Ovary (tissue), 10 donors: ENCODE measurements at regions of chr1 and their contacts with region 1.

Region 1: DNA sequence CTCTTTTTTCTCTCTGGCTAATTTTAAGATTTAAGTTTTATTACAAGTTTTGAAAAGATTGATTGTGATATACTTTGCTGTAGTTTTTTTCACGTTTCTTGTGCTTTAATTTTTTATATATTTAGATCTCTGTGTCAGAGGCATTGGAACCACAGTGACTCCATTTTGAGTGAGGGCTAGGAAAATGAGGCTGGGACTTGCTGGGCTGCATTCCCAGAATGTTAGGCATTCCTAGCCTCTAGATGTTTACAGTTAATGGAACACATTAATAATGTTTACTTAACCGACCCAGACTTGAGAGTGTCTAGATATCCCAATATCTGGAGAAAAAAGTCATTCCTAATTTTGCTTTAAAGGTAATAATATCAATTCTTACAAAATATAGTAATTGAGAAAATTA is 939.4 kb downstream of the BRINP3 start:
- DNase-seq: no peak
- H3K4me3 ChIP-seq: no peak overlapping the region
- H3K27ac ChIP-seq: no peak overlapping the region
- H3K4me1 ChIP-seq: peaks cover 1% of the 10 kb centered on the region
- H3K27me3 ChIP-seq: no peaks in the 10 kb centered on the region
- CTCF ChIP-seq: no peak
- EP300 ChIP-seq: no peak
- POLR2A ChIP-seq: no peak

Region 2: GRCh38 chr1:189313488-189313887 is 224.8 kb before region 1 on chr1:
- intact Hi-C with region 1: no loop called
- DNase-seq: no peak
- H3K4me3 ChIP-seq: no peak overlapping the region
- H3K27ac ChIP-seq: no peak overlapping the region
- H3K4me1 ChIP-seq: no peaks in the 10 kb centered on the region
- H3K27me3 ChIP-seq: no peaks in the 10 kb centered on the region
- CTCF ChIP-seq: no peak
- EP300 ChIP-seq: no peak
- POLR2A ChIP-seq: no peak

Region 3: GRCh38 chr1:190754666-190755065 is 1216.4 kb after region 1 on chr1:
- intact Hi-C with region 1: loop called in 1 of 4 experiments (anchors 5 kb)
- DNase-seq: no peak
- H3K4me3 ChIP-seq: no peak overlapping the region
- H3K27ac ChIP-seq: no peak overlapping the region
- H3K4me1 ChIP-seq: no peaks in the 10 kb centered on the region
- H3K27me3 ChIP-seq: no peaks in the 10 kb centered on the region
- CTCF ChIP-seq: no peak
- EP300 ChIP-seq: no peak
- POLR2A ChIP-seq: no peak